K562 (cell line): ENCODE measurements at regions of chr12 and their contacts with region 1.

Region 1: GRCh38 chr12:12724661-12725545 is 7.7 kb downstream of the CDKN1B start:
- DNase-seq: peak; percentile 34 to 91 (median 44)
- ATAC-seq: peak; percentile 40
- H3K4me3 ChIP-seq: peak overlapping the region; percentile 57
- H3K27ac ChIP-seq: peak overlapping the region; percentile 97
- H3K4me1 ChIP-seq: peaks cover 11 to 18% of the 10 kb centered on the region in 2 experiments; a peak in 2 of 5 replicates
- H3K27me3 ChIP-seq: no peaks in the 10 kb centered on the region
- CTCF ChIP-seq: no peak
- EP300 ChIP-seq: no peak
- POLR2A ChIP-seq: peak; percentile 52; the same call in 1 of the 2 replicates
- RAD21 ChIP-seq: no peak

Region 2: GRCh38 chr12:12736759-12737676 is 12.1 kb after region 1 on chr12:
- CTCF ChIA-PET with region 1: no interaction called
- POLR2A ChIA-PET with region 1: interaction called, 11 read pairs
- in situ Hi-C with region 1: no loop called
- intact Hi-C with region 1: no loop called
- DNase-seq: peak in 3 of 4 experiments; percentile 32 to 43 (median 35)
- ATAC-seq: peak; percentile 78
- H3K4me3 ChIP-seq: no peak overlapping the region
- H3K27ac ChIP-seq: peak overlapping the region; percentile 43; the same call in 1 of the 3 replicates
- H3K4me1 ChIP-seq: peaks cover 0 to 21% of the 10 kb centered on the region in 2 experiments; a peak in 3 of 5 replicates
- H3K27me3 ChIP-seq: no peaks in the 10 kb centered on the region
- CTCF ChIP-seq: peak; percentile 14 to 58 (median 45); a peak in 3 of 6 replicates
- EP300 ChIP-seq: no peak
- POLR2A ChIP-seq: no peak
- RAD21 ChIP-seq: peak; percentile 21 to 45; a peak in 3 of 4 replicates

Region 3: DNA sequence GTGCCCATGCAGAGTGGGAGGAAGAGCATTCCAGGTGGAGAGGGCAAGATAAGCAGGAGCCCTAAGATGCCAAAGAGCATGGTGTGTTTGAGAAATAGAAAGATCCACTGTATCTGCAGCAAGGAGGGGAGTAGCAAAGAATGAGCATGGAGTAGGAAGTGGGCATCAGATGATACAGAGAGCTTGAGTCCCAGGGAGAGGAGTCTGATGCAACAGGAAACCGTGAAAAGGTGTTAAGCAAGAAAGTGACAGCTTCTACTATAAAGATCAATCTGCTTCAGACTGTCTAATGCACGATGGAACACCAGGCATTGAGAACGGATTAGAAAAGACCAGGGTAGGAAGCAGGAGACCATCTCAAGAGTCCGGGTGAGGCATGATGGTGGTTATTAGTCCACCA is 239.4 kb after region 1 on chr12:
- CTCF ChIA-PET with region 1: no interaction called
- POLR2A ChIA-PET with region 1: no interaction called
- in situ Hi-C with region 1: no loop called
- intact Hi-C with region 1: no loop called
- DNase-seq: no peak
- ATAC-seq: no peak
- H3K4me3 ChIP-seq: no peak overlapping the region
- H3K27ac ChIP-seq: no peak overlapping the region
- H3K4me1 ChIP-seq: no peaks in the 10 kb centered on the region
- H3K27me3 ChIP-seq: no peaks in the 10 kb centered on the region
- CTCF ChIP-seq: no peak
- EP300 ChIP-seq: no peak
- POLR2A ChIP-seq: no peak
- RAD21 ChIP-seq: no peak